ENCODE measurements at regions of chr2 and their contacts with region 1.

Region 1: DNA sequence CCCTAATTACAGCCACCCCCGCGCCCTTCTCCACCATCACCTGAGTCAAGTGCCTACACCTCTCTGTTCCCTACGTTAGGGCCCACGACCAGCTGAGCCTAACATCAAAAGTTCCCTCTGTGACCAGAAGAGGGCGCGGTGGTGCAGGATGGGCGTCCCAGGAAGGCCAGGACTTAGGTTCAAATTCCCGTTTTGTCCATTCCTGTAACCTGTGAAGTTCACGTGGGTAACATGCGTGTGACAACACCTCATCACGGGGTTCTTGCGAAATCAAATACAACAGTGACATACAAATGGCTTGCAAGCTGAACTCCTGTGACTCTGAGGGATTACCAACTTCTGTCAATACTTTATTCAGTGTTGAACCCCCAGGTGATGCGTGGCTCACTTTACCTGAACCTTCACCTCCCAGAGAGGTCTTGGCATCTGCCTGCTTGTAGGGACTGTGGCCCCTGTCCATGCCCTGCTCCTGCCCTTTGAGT is 207.9 kb downstream of the ARL4C start:
- DNase-seq: peak; percentile 89
- H3K4me3 Mint-ChIP-seq: no peak overlapping the region
- H3K27ac Mint-ChIP-seq: peak overlapping the region; percentile 96
- H3K4me1 Mint-ChIP-seq: peaks cover 71% of the 10 kb centered on the region
- H3K27me3 Mint-ChIP-seq: no peaks in the 10 kb centered on the region

Region 2: DNA sequence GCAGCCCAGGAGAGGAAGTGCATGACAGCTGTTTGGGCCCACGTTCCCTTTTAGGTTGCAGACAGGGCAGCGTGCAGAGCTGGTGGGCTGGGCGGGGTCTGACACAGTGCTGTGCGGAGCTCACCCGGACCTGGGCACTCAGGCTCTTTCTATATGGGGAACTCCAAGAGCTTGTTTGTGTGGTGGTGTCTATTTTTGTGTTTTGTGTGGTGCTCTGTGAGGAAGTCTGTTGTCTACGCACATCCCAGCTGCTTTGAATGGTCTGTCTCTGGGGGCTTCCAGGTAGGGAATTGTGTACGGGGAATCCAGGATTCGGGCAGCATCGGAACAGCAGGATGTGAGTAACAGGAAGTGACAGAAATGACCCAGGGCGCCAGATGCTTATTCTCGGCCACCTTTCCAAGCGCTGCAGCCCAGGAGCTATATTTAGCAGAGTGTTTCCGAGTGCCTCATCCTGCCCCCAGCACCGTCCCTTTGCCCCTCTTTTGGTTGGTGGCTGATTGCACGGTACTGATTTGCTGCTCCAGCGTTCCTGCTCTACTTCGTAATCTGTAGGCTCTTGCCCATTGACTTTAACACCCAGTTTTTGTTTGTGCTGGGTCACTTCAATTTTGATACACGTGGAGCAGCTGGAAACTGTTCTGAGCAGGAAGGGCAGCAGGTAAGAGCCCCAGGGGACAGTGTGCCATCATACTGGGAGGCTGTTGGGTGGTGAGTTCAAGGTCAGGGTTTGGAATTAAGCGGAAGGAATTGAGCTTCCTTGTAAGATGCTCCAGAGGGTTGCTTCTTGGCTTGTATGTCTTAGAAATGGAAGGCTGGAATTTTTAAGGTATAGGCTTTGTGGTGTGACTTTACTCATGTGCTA is 870.0 kb before region 1 on chr2:
- CTCF ChIA-PET with region 1: no interaction called
- intact Hi-C with region 1: loop called (anchors 5 kb)
- DNase-seq: peak; percentile 67
- H3K4me3 Mint-ChIP-seq: peak overlapping the region; percentile 67
- H3K27ac Mint-ChIP-seq: peak overlapping the region; percentile 88
- H3K4me1 Mint-ChIP-seq: peaks cover 97% of the 10 kb centered on the region
- H3K27me3 Mint-ChIP-seq: no peaks in the 10 kb centered on the region

Region 3: DNA sequence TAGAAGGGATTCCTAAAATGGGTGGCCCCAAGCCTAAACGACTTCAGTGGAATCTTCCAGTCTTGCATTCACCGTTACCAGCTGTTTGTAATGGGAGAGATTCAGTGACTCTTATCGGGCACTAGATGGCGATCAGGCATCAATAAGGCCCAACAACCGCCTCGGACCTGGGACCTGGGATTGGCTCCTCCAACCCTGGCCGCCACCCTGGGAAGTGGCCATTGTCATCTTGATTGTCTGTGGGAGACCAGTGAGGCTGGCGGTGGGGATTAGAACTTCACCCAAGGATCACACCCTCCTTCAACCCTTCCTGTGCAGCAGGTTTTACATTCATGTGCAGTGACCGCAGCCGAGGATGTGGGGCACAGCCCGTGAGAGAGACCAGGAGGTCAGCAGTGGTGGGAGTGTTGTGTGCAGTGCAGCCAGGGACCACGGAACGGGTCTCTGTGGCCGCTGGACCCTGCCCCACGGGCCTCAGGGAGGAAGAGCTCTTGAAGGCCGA is 153.2 kb before region 1 on chr2:
- CTCF ChIA-PET with region 1: interaction called, 5 read pairs
- intact Hi-C with region 1: loop called (anchors 2 kb)
- DNase-seq: peak; percentile 67
- H3K4me3 Mint-ChIP-seq: no peak overlapping the region
- H3K27ac Mint-ChIP-seq: no peak overlapping the region
- H3K4me1 Mint-ChIP-seq: peaks cover 27% of the 10 kb centered on the region
- H3K27me3 Mint-ChIP-seq: no peaks in the 10 kb centered on the region

Region 4: GRCh38 chr2:234257856-234258561 is 31.0 kb before region 1 on chr2:
- CTCF ChIA-PET with region 1: no interaction called
- intact Hi-C with region 1: no loop called
- DNase-seq: peak; percentile 60
- H3K4me3 Mint-ChIP-seq: no peak overlapping the region
- H3K27ac Mint-ChIP-seq: no peak overlapping the region
- H3K4me1 Mint-ChIP-seq: peaks cover 11% of the 10 kb centered on the region
- H3K27me3 Mint-ChIP-seq: no peaks in the 10 kb centered on the region

Region 5: GRCh38 chr2:234322766-234323465 is 33.9 kb after region 1 on chr2:
- CTCF ChIA-PET with region 1: no interaction called
- intact Hi-C with region 1: loop called (anchors 1 kb)
- DNase-seq: no peak
- H3K4me3 Mint-ChIP-seq: no peak overlapping the region
- H3K27ac Mint-ChIP-seq: peak overlapping the region; percentile 69
- H3K4me1 Mint-ChIP-seq: peaks cover 42% of the 10 kb centered on the region
- H3K27me3 Mint-ChIP-seq: no peaks in the 10 kb centered on the region

Region 6: DNA sequence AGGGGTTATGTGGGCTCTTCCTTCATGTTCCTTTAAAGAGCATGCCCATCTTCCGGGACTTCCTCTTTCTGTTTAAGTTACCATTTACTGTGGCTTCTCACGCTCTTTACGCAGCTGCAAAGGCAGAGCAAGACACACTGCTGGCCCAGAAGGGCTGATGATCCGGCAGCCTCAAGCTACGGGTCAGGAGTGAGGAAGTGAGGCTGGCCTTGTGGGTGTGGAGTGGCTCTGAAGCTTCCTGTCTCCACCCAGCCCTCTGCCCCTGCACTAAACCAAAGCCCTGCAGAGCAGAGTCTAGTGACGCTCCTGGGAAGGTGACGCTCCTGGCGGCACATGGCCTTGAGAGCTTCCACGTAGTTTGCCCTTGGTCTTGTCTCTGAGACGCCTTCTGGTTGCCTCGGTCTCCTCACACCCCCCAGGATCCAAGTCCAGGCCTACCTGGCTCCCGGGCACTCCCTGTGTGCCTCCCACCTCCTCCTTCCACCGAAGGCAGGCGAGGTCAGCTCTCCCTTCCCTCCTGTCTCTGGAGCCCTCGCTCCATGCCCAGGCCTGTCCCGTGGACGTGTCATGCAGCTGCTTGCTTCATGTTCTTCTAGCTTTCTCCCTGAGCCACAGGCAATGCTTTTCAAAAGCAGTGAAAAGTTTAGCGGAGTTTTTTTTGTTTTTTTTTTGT is 157.5 kb after region 1 on chr2:
- CTCF ChIA-PET with region 1: interaction called, 6 read pairs
- intact Hi-C with region 1: loop called (anchors 1 kb)
- DNase-seq: peak; percentile 84
- H3K4me3 Mint-ChIP-seq: peak overlapping the region; percentile 73
- H3K27ac Mint-ChIP-seq: peak overlapping the region; percentile 96
- H3K4me1 Mint-ChIP-seq: peaks cover 80% of the 10 kb centered on the region
- H3K27me3 Mint-ChIP-seq: no peaks in the 10 kb centered on the region

Region 7: DNA sequence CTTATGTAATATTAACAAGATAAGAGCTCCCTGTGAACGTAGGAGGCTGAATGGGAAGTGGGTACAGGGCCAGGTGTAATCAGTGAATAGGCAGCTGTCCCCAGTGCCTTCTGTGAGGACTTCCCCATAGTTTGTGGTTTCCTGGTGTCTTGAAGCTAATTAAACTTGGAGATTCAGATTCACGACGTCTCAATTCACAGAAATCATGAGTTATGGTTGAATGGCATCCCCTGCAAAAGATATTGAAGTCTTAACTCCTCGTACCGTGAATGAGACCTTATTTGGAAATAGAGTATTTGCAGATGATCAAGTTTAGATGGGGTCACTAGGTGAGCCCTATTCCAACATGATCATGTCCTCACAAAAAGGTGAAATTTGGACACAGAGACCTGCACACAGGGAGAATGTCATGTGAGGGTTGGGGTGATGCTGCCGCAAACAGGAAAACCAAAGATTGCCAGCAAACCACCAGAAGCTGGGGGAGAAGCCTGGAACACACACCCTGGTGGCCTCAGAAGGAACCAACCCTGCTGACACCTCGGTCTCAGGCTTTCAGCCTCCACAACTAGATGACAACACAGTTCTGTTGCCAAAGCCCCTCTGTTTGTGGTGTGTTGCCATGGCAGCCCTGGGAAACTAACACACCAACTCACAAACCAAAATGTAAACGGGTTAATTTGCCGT is 194.7 kb after region 1 on chr2:
- CTCF ChIA-PET with region 1: interaction called, 6 read pairs
- intact Hi-C with region 1: loop called (anchors 1 kb)
- DNase-seq: peak; percentile 88
- H3K4me3 Mint-ChIP-seq: peak overlapping the region; percentile 59
- H3K27ac Mint-ChIP-seq: peak overlapping the region; percentile 88
- H3K4me1 Mint-ChIP-seq: peaks cover 78% of the 10 kb centered on the region
- H3K27me3 Mint-ChIP-seq: no peaks in the 10 kb centered on the region

Region 8: GRCh38 chr2:234544659-234545611 is 255.9 kb after region 1 on chr2:
- CTCF ChIA-PET with region 1: interaction called, 7 read pairs
- intact Hi-C with region 1: loop called (anchors 2 kb)
- DNase-seq: peak; percentile 85
- H3K4me3 Mint-ChIP-seq: no peak overlapping the region
- H3K27ac Mint-ChIP-seq: no peak overlapping the region
- H3K4me1 Mint-ChIP-seq: no peaks in the 10 kb centered on the region
- H3K27me3 Mint-ChIP-seq: peaks cover 4% of the 10 kb centered on the region

Measured in activated naive CD4-positive, alpha-beta T cell treated with anti-CD3 and anti-CD28 coated beads for 36 hours (primary cell).